GM12878 (cell line): ENCODE measurements at regions of chr18 and their contacts with region 1.

Region 1: DNA sequence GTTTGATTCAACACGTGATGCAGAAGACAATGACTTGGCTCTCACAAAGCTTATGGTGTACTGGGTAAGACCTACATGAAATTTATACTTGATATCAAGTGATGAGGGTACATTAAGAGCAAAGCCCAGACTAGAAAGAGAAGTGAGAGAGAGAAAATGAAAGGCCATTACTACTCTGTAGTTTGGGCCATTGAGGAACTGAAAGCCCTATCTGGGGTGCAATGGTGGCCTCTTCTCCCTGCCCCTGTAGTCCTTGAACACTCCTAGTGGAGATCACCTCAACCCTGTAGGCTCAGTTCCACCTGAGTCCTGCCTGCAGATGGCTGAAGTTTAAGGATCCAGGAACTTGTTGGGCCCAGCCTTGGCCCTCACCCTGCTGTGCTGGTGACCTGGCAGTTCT is 569.8 kb upstream of the MEX3C start:
- DNase-seq: no peak
- ATAC-seq: peak; percentile 90
- H3K4me3 ChIP-seq: no peak overlapping the region
- H3K27ac ChIP-seq: peak overlapping the region; percentile 68
- H3K4me1 ChIP-seq: peaks cover 25% of the 10 kb centered on the region
- H3K27me3 ChIP-seq: no peaks in the 10 kb centered on the region
- CTCF ChIP-seq: no peak
- EP300 ChIP-seq: no peak
- POLR2A ChIP-seq: no peak
- RAD21 ChIP-seq: 0 out of 2 replicates have a peak, but pooled peaks have one; percentile 13

Region 2: DNA sequence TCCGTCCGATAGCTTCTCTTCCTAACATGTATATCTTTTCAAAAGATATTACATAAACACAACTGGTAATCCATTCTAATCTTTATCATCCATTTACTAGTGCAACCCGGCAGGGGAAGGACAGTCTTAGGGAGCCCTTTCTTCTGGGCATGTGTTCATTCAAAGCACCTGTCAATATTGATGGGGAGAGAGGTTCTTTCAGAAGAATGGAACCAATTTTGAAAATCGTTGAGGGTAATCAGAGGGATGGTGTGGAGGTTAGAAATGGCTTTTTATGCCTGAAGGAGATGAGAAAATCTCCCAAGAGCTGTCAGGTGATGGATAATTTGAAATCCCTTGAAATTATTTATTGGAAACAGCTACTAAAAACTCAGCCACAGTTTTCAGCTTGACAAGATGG is 10.8 kb after region 1 on chr18:
- CTCF ChIA-PET with region 1: interaction called, 3 read pairs
- POLR2A ChIA-PET with region 1: no interaction called
- RAD21 ChIA-PET with region 1: no interaction called
- SMC1A ChIA-PET with region 1: interaction called, 11 read pairs
- in situ Hi-C with region 1: no loop called
- intact Hi-C with region 1: no loop called
- DNase-seq: no peak
- ATAC-seq: no peak
- H3K4me3 ChIP-seq: no peak overlapping the region
- H3K27ac ChIP-seq: no peak overlapping the region
- H3K4me1 ChIP-seq: no peaks in the 10 kb centered on the region
- H3K27me3 ChIP-seq: no peaks in the 10 kb centered on the region
- CTCF ChIP-seq: no peak
- EP300 ChIP-seq: no peak
- POLR2A ChIP-seq: no peak
- RAD21 ChIP-seq: no peak

Region 3: GRCh38 chr18:52484977-52485376 is 717.7 kb after region 1 on chr18:
- CTCF ChIA-PET with region 1: no interaction called
- POLR2A ChIA-PET with region 1: no interaction called
- RAD21 ChIA-PET with region 1: no interaction called
- SMC1A ChIA-PET with region 1: no interaction called
- in situ Hi-C with region 1: no loop called
- intact Hi-C with region 1: no loop called
- DNase-seq: no peak
- ATAC-seq: no peak
- H3K4me3 ChIP-seq: no peak overlapping the region
- H3K27ac ChIP-seq: no peak overlapping the region
- H3K4me1 ChIP-seq: no peaks in the 10 kb centered on the region
- H3K27me3 ChIP-seq: no peaks in the 10 kb centered on the region
- CTCF ChIP-seq: no peak
- EP300 ChIP-seq: no peak
- POLR2A ChIP-seq: no peak
- RAD21 ChIP-seq: no peak